Gastrocnemius medialis (tissue), 4 donors: ENCODE measurements at regions of chr21 and their contacts with region 1.

Region 1: GRCh38 chr21:44873356-44874239 is at the start of gene PTTG1IP:
- DNase-seq: peak; percentile 97 to 99
- ATAC-seq: peak; percentile 52 to 54
- H3K4me3 ChIP-seq: peak within 1 kb of the TSS; percentile 74 to 87 (median 82)
- H3K27ac ChIP-seq: peak within 1 kb of the TSS; percentile 95
- H3K4me1 ChIP-seq: peaks cover 58% of the 10 kb centered on the region in 2 donors
- H3K27me3 ChIP-seq: no peaks in the 10 kb centered on the region
- CTCF ChIP-seq: no peak
- POLR2A ChIP-seq: peak; percentile 95 to 96
- total RNA-seq, gene PTTG1IP: 116 to 217 (median 127) TPM

Region 2: DNA sequence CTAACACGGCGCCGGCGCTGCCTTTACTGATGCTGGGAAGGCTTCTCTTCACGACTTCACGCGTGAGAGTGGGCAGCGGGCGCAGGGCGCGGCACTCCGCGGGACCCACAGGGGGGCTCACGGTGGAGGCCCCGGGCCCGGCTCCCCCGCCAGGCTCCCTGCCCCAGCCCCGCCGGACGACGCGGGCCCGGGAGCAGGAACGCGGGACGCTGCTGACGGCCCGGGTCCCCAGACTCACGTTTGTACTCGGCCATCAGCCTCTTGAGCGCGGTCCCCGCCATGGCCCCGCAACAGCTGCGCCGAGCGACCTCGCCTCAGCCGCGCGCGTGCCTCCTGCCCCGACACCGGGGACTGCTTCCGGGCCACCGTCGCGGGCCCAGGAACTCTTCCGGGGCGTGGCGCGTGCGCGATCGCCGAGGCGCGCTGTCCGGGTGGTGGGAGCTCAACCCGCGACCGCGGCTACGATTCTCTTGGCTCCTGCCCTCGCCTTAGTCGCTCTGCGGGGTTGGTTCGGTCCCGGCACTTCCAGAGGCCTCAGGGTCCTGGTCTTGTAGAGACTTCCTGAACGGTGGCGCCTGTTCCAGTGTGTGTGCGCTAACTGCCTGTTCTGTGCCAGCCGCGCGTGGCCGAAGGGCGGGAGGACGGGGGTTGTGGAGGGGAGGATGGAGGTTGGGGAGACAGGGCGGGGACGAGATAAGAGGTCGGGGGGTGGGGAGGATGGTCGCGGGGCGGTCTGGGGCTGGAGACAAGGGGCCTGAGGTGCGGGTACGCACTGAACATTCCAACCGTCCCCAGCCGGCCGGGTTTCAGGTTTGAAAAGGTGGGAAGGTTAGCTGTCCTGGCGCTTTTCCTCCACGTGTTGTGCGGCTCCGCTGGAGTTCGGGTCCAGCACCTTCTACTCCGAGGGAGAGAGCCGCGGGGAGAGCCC is 71.9 kb before region 1 on chr21 and contains the start of gene UBE2G2:
- in situ Hi-C with region 1: no loop called
- intact Hi-C with region 1: loop called (anchors 1 kb)
- DNase-seq: peak; percentile 59 to 74
- ATAC-seq: peak; percentile 91 to 92
- H3K4me3 ChIP-seq: peak within 1 kb of the TSS; percentile 80 to 91 (median 89)
- H3K27ac ChIP-seq: peak within 1 kb of the TSS; percentile 86 to 95 (median 90)
- H3K4me1 ChIP-seq: peaks cover 23 to 39% of the 10 kb centered on the region in 2 donors
- H3K27me3 ChIP-seq: no peaks in the 10 kb centered on the region
- CTCF ChIP-seq: no peak
- POLR2A ChIP-seq: peak; percentile 87 to 91
- total RNA-seq, gene UBE2G2: 64.2 to 83.8 (median 73.3) TPM

Region 3: DNA sequence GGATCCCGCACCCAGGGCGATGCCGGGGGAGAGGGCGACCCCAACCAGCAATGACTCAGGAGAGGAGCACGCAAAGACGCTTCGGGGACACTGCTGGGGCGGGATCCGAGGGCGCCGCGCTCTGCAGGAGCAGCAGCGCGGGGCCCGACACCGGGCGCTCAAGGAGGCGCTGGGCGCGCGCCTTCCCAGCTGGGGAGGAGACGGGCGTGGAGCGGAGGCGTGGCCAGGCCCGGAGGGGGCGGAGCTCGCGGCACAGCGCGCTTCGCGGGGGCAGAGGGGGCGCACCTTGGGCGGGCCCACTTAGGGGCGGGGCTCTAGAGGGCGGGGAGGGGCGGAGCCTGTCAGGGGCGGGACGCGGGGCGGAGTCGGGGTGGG is 56.1 kb before region 1 on chr21:
- in situ Hi-C with region 1: loop called in 1 of 4 experiments (anchors 5 kb)
- intact Hi-C with region 1: loop called (anchors 1 kb)
- DNase-seq: peak; percentile 85 to 87
- ATAC-seq: peak; percentile 77 to 78
- H3K4me3 ChIP-seq: peak overlapping the region; percentile 62 to 90 (median 74)
- H3K27ac ChIP-seq: peak overlapping the region; percentile 78 to 91 (median 90)
- H3K4me1 ChIP-seq: peaks cover 9 to 22% of the 10 kb centered on the region in 2 donors
- H3K27me3 ChIP-seq: no peaks in the 10 kb centered on the region
- CTCF ChIP-seq: no peak
- POLR2A ChIP-seq: no peak

Region 4: GRCh38 chr21:44854664-44855446 is 18.7 kb before region 1 on chr21:
- in situ Hi-C with region 1: no loop called
- intact Hi-C with region 1: loop called (anchors 1 kb)
- DNase-seq: peak; percentile 62 to 89
- ATAC-seq: peak; percentile 70 to 72
- H3K4me3 ChIP-seq: peak overlapping the region in 2 of 4 donors; percentile 9 to 16
- H3K27ac ChIP-seq: peak overlapping the region; percentile 87 to 89 (median 88)
- H3K4me1 ChIP-seq: peaks cover 42 to 48% of the 10 kb centered on the region in 2 donors
- H3K27me3 ChIP-seq: no peaks in the 10 kb centered on the region
- CTCF ChIP-seq: peak in 2 of 5 experiments; percentile 12 to 18
- POLR2A ChIP-seq: peak in 1 of 2 donors; percentile 46

Region 5: DNA sequence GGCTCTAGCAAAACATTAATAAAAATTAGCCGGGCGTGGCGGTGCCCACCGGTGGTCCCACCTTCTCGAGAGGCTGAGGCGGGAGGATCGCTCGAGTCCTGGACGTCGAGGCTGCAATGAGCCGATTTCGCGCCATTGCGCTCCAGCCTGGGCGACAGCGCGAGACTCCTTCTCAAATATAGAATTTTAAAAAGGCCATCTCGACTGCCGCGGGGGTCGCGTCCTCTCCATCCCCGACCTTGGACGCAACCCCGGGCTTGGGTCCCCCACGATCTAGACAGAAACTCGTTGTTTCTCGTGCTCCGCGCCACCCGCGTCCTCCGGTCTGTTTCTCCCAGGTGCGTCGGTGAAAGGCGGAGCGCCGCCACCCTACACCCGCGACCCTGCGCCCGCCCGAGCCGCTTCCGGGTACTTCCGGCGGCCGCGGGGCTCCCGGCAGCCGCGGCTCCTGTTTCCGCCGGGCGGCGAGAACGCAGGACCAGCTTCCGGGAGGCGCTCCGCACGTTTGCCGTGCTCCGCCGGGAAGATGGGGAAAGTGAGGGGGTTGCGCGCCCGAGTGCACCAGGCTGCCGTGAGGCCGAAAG is 66.0 kb after region 1 on chr21 and contains the start of gene SLX9:
- in situ Hi-C with region 1: no loop called
- intact Hi-C with region 1: loop called (anchors 2 kb)
- DNase-seq: peak; percentile 61 to 69
- ATAC-seq: peak; percentile 87 to 90
- H3K4me3 ChIP-seq: peak within 1 kb of the TSS; percentile 71 to 95 (median 83)
- H3K27ac ChIP-seq: peak within 1 kb of the TSS; percentile 78 to 91 (median 84)
- H3K4me1 ChIP-seq: peaks cover 26 to 29% of the 10 kb centered on the region in 2 donors
- H3K27me3 ChIP-seq: no peaks in the 10 kb centered on the region
- CTCF ChIP-seq: no peak
- POLR2A ChIP-seq: peak; percentile 63 to 76
- total RNA-seq, gene SLX9: 23.7 to 37.6 (median 25.8) TPM

Region 6: GRCh38 chr21:45050786-45051489 is 177.3 kb after region 1 on chr21:
- in situ Hi-C with region 1: no loop called
- intact Hi-C with region 1: loop called (anchors 2 kb)
- DNase-seq: peak in 1 of 2 donors; percentile 84
- ATAC-seq: peak; percentile 28 to 49
- H3K4me3 ChIP-seq: peak overlapping the region in 1 of 4 donors; percentile 3
- H3K27ac ChIP-seq: peak overlapping the region; percentile 85 to 93 (median 92)
- H3K4me1 ChIP-seq: peaks cover 36 to 47% of the 10 kb centered on the region in 2 donors
- H3K27me3 ChIP-seq: no peaks in the 10 kb centered on the region
- CTCF ChIP-seq: no peak
- POLR2A ChIP-seq: no peak

Region 7: GRCh38 chr21:45074048-45074817 is 200.6 kb after region 1 on chr21 and contains the start of gene ADARB1:
- in situ Hi-C with region 1: no loop called
- intact Hi-C with region 1: loop called (anchors 5 kb)
- DNase-seq: peak in 1 of 2 donors; percentile 51
- ATAC-seq: peak; percentile 80 to 85
- H3K4me3 ChIP-seq: peak within 1 kb of the TSS; percentile 72 to 90 (median 80)
- H3K27ac ChIP-seq: peak within 1 kb of the TSS; percentile 84 to 95 (median 91)
- H3K4me1 ChIP-seq: peaks cover 33 to 40% of the 10 kb centered on the region in 2 donors
- H3K27me3 ChIP-seq: no peaks in the 10 kb centered on the region
- CTCF ChIP-seq: no peak
- POLR2A ChIP-seq: peak; percentile 89 to 90
- total RNA-seq, gene ADARB1: 5.9 to 11.5 (median 6.9) TPM

Region 8: DNA sequence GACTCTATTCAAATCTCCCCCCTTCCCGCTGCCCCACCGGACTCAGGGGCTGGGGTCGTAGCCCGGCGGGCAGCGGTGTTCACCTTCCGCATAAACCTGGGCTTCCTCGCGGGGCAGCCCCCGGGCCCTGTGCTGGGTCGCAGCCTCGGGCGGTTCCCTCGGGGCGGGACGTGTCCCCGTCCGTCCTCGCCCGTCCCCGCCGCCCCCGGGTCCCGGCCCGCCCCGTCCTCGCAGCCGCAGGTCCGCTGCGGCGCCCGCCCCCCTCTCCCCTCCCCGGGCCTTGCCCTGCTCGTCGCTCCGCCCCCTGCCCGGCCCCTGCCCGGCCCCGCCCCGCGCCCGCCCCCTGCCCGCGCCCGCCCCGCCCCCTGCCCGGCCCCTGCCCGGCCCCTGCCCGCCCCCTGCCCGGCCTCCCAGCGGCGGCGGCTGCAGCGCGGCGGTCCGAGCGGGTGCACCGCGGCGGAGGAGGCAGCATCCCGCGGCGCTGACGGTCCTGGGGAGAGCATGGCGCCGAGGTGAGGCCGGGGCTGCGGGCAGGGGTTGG is 531.2 kb after region 1 on chr21 and contains the start of gene COL18A1:
- in situ Hi-C with region 1: no loop called
- intact Hi-C with region 1: no loop called
- DNase-seq: peak in 1 of 2 donors; percentile 11
- ATAC-seq: peak in 1 of 2 donors; percentile 31
- H3K4me3 ChIP-seq: peak within 1 kb of the TSS; percentile 45 to 63 (median 52)
- H3K27ac ChIP-seq: peak within 1 kb of the TSS; percentile 66 to 82 (median 72)
- H3K4me1 ChIP-seq: peaks cover under 1 to 24% of the 10 kb centered on the region in 2 donors
- H3K27me3 ChIP-seq: peaks cover 25 to 34% (median 29%) of the 10 kb centered on the region in 3 donors
- CTCF ChIP-seq: no peak
- POLR2A ChIP-seq: no peak
- total RNA-seq, gene COL18A1: 16.4 to 42.2 (median 20.7) TPM